Gastrocnemius medialis (tissue), 4 donors: ENCODE measurements at regions of chr19 and their contacts with region 1.

Region 1: DNA sequence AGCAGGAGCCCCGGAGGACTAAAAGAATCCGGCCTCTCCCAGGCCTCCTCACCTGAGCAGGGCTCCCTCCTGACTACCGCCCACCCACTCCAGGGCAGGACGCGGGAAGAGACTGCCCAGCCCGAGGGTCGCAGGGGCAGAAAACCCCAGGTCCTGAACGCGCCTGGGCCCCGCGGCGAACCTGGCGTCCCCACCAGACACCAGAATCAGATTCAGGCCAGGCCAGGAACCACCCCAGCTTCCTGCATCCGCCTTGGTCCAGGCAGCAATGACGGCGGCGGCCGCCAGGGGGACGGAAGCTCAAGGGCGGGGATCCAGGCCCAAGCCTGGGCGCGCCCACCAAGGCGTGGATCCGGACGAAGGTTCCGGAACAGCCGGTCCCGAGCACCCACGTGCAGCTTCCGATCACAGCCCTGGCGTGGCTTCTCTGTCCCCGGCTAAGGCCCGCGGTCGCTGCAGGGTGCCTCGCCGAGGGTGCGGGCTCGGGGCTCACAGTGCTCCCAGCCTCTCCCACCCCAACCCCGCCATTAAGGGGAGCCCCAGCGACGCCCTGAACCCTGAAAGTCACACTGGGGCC is 3.6 kb downstream of the LGALS7 start:
- DNase-seq: peak; percentile 64 to 71
- ATAC-seq: peak; percentile 77 to 80
- H3K4me3 ChIP-seq: peak overlapping the region; percentile 18 to 52 (median 40)
- H3K27ac ChIP-seq: peak overlapping the region; percentile 9 to 68 (median 64)
- H3K4me1 ChIP-seq: no peaks in the 10 kb centered on the region
- H3K27me3 ChIP-seq: peaks cover 0 to 4% (median 0%) of the 10 kb centered on the region in 3 donors
- CTCF ChIP-seq: peak; percentile 50 to 95 (median 93)
- POLR2A ChIP-seq: peak; percentile 23 to 36

Region 2: GRCh38 chr19:38869856-38870607 is 100.3 kb after region 1 on chr19:
- in situ Hi-C with region 1: no loop called
- intact Hi-C with region 1: loop called (anchors 5 kb)
- DNase-seq: peak in 1 of 2 donors; percentile 79
- ATAC-seq: peak; percentile 64 to 79
- H3K4me3 ChIP-seq: peak overlapping the region; percentile 33 to 56 (median 48)
- H3K27ac ChIP-seq: peak overlapping the region; percentile 20 to 65 (median 47)
- H3K4me1 ChIP-seq: peaks cover 0 to 6% of the 10 kb centered on the region in 2 donors
- H3K27me3 ChIP-seq: no peaks in the 10 kb centered on the region
- CTCF ChIP-seq: peak; percentile 63 to 89 (median 77)
- POLR2A ChIP-seq: no peak

Region 3: GRCh38 chr19:38929929-38930775 is 160.4 kb after region 1 on chr19 and contains the start of gene SARS2:
- in situ Hi-C with region 1: no loop called
- intact Hi-C with region 1: loop called (anchors 2 kb)
- DNase-seq: peak; percentile 84 to 86
- ATAC-seq: peak; percentile 87 to 91
- H3K4me3 ChIP-seq: peak within 1 kb of the TSS; percentile 64 to 86 (median 76)
- H3K27ac ChIP-seq: peak within 1 kb of the TSS; percentile 81 to 94 (median 88)
- H3K4me1 ChIP-seq: peaks cover 14 to 17% of the 10 kb centered on the region in 2 donors
- H3K27me3 ChIP-seq: no peaks in the 10 kb centered on the region
- CTCF ChIP-seq: peak; percentile 97 to 100 (median 98)
- POLR2A ChIP-seq: no peak
- total RNA-seq, gene SARS2: 12.1 to 30.0 (median 27.8) TPM